Panc1 (cell line): ENCODE measurements at regions of chrX and their contacts with region 1.

Region 1: DNA sequence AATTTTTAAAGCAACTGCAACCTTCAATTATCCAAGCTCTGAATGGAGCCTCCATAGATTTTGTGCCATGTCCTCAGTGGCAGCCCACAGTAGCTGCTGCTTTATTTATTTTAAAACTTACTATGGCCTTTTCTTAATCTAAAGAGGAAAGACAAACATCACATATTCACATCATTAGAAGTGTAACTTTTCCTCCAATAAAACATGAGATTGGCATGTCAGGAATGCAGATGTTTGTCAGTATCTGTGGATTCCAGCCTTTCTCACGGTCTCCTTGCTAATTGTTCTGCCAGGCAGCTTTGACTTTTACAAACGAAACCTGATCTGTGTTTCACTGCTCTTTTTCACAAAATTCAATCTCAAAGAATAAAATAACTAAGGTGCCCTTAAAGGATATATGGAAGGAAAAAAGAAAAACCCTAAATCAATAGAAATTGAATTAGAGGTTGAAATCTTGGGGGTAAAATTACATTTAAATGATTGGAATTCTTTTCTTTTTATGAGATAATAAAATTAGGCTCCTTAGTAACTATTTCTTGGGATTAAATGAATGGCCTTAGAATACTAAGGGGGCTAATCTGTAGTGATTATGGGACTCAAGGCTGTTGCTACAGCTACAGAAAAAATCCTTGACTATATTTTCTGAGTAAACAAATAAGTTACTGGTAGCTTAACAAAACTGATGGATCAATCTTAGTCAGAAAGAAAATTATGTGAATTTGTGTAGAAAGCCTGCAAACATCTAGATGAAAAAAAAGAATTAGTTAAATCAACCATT is 151.3 kb downstream of the RTL9 start:
- DNase-seq: no peak
- ATAC-seq: no peak
- H3K4me3 ChIP-seq: no peak overlapping the region
- H3K27ac ChIP-seq: no peak overlapping the region
- H3K4me1 ChIP-seq: peaks cover 5% of the 10 kb centered on the region; the same call in 1 of the 2 replicates
- H3K27me3 ChIP-seq: no peaks in the 10 kb centered on the region
- CTCF ChIP-seq: no peak

Region 2: GRCh38 chrX:109619771-109620170 is 890.2 kb before region 1 on chrX:
- CTCF ChIA-PET with region 1: no interaction called
- POLR2A ChIA-PET with region 1: no interaction called
- in situ Hi-C with region 1: no loop called
- intact Hi-C with region 1: no loop called
- DNase-seq: no peak
- ATAC-seq: no peak
- H3K4me3 ChIP-seq: no peak overlapping the region
- H3K27ac ChIP-seq: no peak overlapping the region
- H3K4me1 ChIP-seq: no peaks in the 10 kb centered on the region
- H3K27me3 ChIP-seq: no peaks in the 10 kb centered on the region
- CTCF ChIP-seq: no peak

Region 3: GRCh38 chrX:110531873-110532580 is 22.1 kb after region 1 on chrX:
- CTCF ChIA-PET with region 1: interaction called, 10 read pairs
- POLR2A ChIA-PET with region 1: no interaction called
- in situ Hi-C with region 1: no loop called
- intact Hi-C with region 1: no loop called
- DNase-seq: no peak
- ATAC-seq: no peak
- H3K4me3 ChIP-seq: no peak overlapping the region
- H3K27ac ChIP-seq: no peak overlapping the region
- H3K4me1 ChIP-seq: no peaks in the 10 kb centered on the region
- H3K27me3 ChIP-seq: no peaks in the 10 kb centered on the region
- CTCF ChIP-seq: no peak